Caco-2 (cell line): ENCODE measurements at regions of chr4 and their contacts with region 1.

Region 1: GRCh38 chr4:40897557-40898203 is 147.9 kb downstream of the NSUN7 start:
- DNase-seq: peak; percentile 51 to 72
- H3K4me3 ChIP-seq: no peak overlapping the region
- H3K4me3 Mint-ChIP-seq: peak overlapping the region; percentile 30
- H3K27ac Mint-ChIP-seq: no peak overlapping the region
- H3K4me1 ChIP-seq: no peaks in the 10 kb centered on the region
- H3K4me1 Mint-ChIP-seq: peaks cover 9% of the 10 kb centered on the region
- H3K27me3 ChIP-seq: no peaks in the 10 kb centered on the region
- H3K27me3 Mint-ChIP-seq: no peaks in the 10 kb centered on the region
- CTCF ChIP-seq: peak; percentile 61 to 67

Region 2: DNA sequence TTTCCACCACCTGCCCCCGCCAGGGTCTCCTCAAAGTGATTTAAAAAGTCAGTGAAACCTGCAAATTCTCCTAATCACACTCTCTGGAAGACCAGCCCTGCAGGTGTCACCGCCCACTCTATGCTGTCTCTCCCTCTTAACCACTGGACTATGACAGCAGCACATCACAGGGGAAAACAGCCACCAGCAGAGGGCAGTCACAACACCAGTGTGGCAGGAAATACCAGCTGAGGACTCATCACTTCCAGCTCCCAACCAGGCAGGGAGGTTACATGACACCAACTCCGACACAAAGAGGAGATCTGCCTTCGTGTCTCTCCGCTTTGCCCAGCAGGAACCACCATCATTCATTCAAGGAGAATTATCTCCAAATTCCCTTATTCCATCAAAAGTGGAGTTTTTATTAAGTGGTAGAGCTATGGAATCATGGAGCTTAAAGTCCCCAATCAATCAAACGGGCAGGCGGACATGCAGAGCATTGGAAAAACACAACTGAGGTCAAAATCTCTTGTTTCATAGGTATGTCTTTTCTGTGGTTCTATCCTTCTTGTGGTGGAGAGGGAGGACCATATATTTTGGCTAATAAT is 56.6 kb before region 1 on chr4:
- CTCF ChIA-PET with region 1: interaction called, 9 read pairs
- POLR2A ChIA-PET with region 1: no interaction called
- intact Hi-C with region 1: loop called (anchors 1 kb)
- DNase-seq: peak; percentile 78 to 80
- H3K4me3 ChIP-seq: no peak overlapping the region
- H3K4me3 Mint-ChIP-seq: no peak overlapping the region
- H3K27ac Mint-ChIP-seq: no peak overlapping the region
- H3K4me1 ChIP-seq: no peaks in the 10 kb centered on the region
- H3K4me1 Mint-ChIP-seq: no peaks in the 10 kb centered on the region
- H3K27me3 ChIP-seq: no peaks in the 10 kb centered on the region
- H3K27me3 Mint-ChIP-seq: no peaks in the 10 kb centered on the region
- CTCF ChIP-seq: peak; percentile 63 to 85